ENCODE measurements at regions of chr10 and their contacts with region 1.

Region 1: DNA sequence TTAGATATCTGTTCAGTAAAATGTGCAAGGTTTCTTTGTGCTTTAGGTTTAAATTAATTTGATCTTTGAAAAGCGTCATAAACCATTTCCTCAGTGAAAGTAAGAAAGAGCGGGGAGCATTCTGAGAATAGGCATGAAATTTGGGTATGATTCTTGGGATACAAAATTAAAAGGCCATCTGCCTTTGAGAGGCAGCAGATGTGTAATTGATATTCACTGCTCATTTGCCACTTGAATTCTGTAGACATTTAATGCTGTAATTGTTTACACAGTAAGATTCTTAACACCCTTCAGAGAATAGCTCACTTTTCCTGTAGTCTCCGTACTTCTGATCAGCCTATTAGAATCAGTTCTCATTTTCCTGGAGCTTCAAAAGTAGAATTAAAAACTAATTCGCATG is 18.7 kb downstream of the FRMD4A start:
- DNase-seq: no peak
- ATAC-seq: no peak
- H3K4me3 Mint-ChIP-seq: no peak overlapping the region
- H3K27ac Mint-ChIP-seq: no peak overlapping the region
- H3K4me1 Mint-ChIP-seq: no peaks in the 10 kb centered on the region
- H3K27me3 Mint-ChIP-seq: peaks cover 25% of the 10 kb centered on the region
- CTCF ChIP-seq: no peak

Region 2: GRCh38 chr10:14325325-14325955 is 13.4 kb after region 1 on chr10:
- CTCF ChIA-PET with region 1: interaction called, 15 read pairs
- POLR2A ChIA-PET with region 1: no interaction called
- intact Hi-C with region 1: no loop called
- DNase-seq: peak; percentile 85
- ATAC-seq: no peak
- H3K4me3 Mint-ChIP-seq: no peak overlapping the region
- H3K27ac Mint-ChIP-seq: no peak overlapping the region
- H3K4me1 Mint-ChIP-seq: no peaks in the 10 kb centered on the region
- H3K27me3 Mint-ChIP-seq: peaks cover 27% of the 10 kb centered on the region
- CTCF ChIP-seq: peak; percentile 69

Measured in activated CD8-positive, alpha-beta T cell treated with anti-CD3 and anti-CD28 coated beads for 36 hours (primary cell).